GM12878 (cell line): ENCODE measurements at regions of chr1 and their contacts with region 1.

Region 1: DNA sequence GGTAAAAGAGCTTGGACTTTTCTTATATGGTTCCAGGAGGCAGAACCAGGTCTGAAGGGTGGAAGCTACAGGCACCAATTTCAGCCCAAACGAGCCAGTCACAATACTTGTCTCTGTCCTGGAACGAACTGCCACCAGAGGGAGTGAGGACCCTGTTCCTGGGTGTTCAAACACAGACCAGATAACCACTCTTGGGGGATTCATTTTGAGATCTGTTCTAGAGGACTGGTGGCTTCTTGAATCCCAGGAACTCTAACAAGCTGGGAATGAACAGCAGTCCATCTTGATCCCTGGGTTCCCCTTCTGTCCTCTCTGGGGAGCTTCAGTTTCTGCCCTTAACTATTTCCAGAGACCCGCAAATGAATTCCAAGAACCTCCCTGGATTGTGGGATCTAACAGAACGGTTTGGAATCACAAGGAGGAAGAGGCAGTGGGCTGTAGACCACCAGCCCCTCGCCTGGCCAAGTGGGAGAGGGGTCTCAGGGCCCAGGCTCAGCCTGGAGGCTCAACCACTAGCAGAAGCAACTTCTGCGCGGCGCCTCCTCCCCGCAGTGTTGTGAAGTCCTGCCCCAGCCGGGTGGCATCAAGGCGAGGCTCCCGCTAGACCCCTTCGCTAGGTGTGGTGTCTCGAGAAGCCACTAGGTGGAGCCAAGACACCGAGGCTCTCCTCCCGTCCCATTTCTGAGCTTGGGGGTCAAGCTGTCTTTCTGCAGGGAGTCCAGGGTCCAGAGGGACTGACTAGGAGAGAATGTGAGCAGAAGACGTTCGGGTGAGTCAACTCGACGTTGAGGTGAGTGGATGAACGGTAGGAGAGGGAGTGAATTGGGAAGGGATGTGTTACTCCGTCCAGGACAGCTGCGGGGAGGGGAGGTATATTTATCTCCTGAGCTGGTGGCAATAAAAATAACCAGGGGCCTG is 12.1 kb upstream of the NES start:
- DNase-seq: no peak
- ATAC-seq: peak; percentile 97
- H3K4me3 ChIP-seq: no peak overlapping the region
- H3K27ac ChIP-seq: no peak overlapping the region
- H3K4me1 ChIP-seq: peaks cover 4% of the 10 kb centered on the region
- H3K27me3 ChIP-seq: peaks cover 18 to 33% of the 10 kb centered on the region in 2 experiments
- CTCF ChIP-seq: peak; percentile 92 to 97 (median 97)
- EP300 ChIP-seq: no peak
- POLR2A ChIP-seq: no peak
- RAD21 ChIP-seq: peak; percentile 91

Region 2: GRCh38 chr1:156282479-156283222 is 406.6 kb before region 1 on chr1 and contains the start of gene SMG5:
- CTCF ChIA-PET with region 1: no interaction called
- POLR2A ChIA-PET with region 1: no interaction called
- RAD21 ChIA-PET with region 1: no interaction called
- SMC1A ChIA-PET with region 1: no interaction called
- in situ Hi-C with region 1: no loop called
- intact Hi-C with region 1: no loop called
- DNase-seq: peak; percentile 96
- ATAC-seq: peak; percentile 93
- H3K4me3 ChIP-seq: peak within 1 kb of the TSS; percentile 94
- H3K27ac ChIP-seq: peak within 1 kb of the TSS; percentile 86
- H3K4me1 ChIP-seq: peaks cover 15% of the 10 kb centered on the region; the same call in 1 of the 2 replicates
- H3K27me3 ChIP-seq: no peaks in the 10 kb centered on the region
- CTCF ChIP-seq: no peak
- EP300 ChIP-seq: no peak
- POLR2A ChIP-seq: peak; percentile 100
- RAD21 ChIP-seq: no peak
- polyA plus RNA-seq, gene SMG5: 0.76 to 1.9 TPM

Region 3: DNA sequence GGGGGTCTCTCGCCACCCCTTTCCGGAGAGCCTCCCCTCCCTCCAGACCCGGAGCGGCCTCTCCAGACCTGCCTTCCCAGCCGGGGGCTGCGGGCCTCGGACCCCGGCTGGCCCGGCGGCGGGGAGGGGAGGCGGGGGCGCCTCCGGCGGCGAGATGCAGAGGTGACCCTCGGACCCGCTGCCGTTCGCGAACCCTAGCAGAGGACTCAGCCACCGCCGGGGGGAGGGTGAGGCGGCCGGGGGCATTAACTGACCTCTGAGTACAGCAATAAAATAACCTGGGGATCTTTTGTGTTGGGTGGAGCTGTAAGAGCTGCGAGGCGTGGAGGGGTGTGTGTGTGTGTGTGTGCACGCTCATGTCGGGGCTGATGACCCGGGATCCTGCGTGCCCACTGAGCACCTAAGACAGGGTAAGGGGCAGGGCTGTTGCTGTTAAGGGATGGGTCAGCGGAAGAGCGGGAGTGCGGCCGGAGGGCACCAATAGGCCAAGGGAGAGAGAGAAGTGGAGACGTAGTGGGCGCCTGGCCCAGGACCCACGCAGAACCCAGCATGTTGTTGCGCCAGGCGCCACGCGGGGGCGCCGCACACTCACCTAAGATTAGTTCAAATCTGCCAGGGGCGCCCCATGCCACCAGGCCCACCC is 63.7 kb before region 1 on chr1:
- CTCF ChIA-PET with region 1: interaction called, 46 read pairs
- POLR2A ChIA-PET with region 1: no interaction called
- RAD21 ChIA-PET with region 1: interaction called, 5 read pairs
- SMC1A ChIA-PET with region 1: interaction called, 4 read pairs
- in situ Hi-C with region 1: no loop called
- intact Hi-C with region 1: no loop called
- DNase-seq: no peak
- ATAC-seq: peak; percentile 78
- H3K4me3 ChIP-seq: no peak overlapping the region
- H3K27ac ChIP-seq: no peak overlapping the region
- H3K4me1 ChIP-seq: no peaks in the 10 kb centered on the region
- H3K27me3 ChIP-seq: peaks cover 10 to 20% of the 10 kb centered on the region in 2 experiments
- CTCF ChIP-seq: peak; percentile 75 to 93 (median 80)
- EP300 ChIP-seq: no peak
- POLR2A ChIP-seq: no peak
- RAD21 ChIP-seq: peak; percentile 64

Region 4: GRCh38 chr1:156677616-156678596 is 11.4 kb before region 1 on chr1:
- CTCF ChIA-PET with region 1: interaction called, 38 read pairs
- POLR2A ChIA-PET with region 1: no interaction called
- RAD21 ChIA-PET with region 1: interaction called, 9 read pairs
- SMC1A ChIA-PET with region 1: interaction called, 7 read pairs
- in situ Hi-C with region 1: no loop called
- intact Hi-C with region 1: no loop called
- DNase-seq: no peak
- ATAC-seq: peak; percentile 70
- H3K4me3 ChIP-seq: no peak overlapping the region
- H3K27ac ChIP-seq: no peak overlapping the region
- H3K4me1 ChIP-seq: peaks cover 9% of the 10 kb centered on the region
- H3K27me3 ChIP-seq: peaks cover 16 to 21% of the 10 kb centered on the region in 2 experiments
- CTCF ChIP-seq: peak; percentile 79 to 86 (median 83)
- EP300 ChIP-seq: no peak
- POLR2A ChIP-seq: no peak
- RAD21 ChIP-seq: peak; percentile 96

Region 5: GRCh38 chr1:156721535-156721934 is 32.2 kb after region 1 on chr1:
- CTCF ChIA-PET with region 1: interaction called, 433 read pairs
- POLR2A ChIA-PET with region 1: interaction called, 21 read pairs
- RAD21 ChIA-PET with region 1: interaction called, 173 read pairs
- SMC1A ChIA-PET with region 1: interaction called, 168 read pairs
- in situ Hi-C with region 1: no loop called
- intact Hi-C with region 1: loop called (anchors 1 kb)
- DNase-seq: no peak
- ATAC-seq: peak; percentile 58
- H3K4me3 ChIP-seq: no peak overlapping the region
- H3K27ac ChIP-seq: peak overlapping the region; percentile 72
- H3K4me1 ChIP-seq: peaks cover 16% of the 10 kb centered on the region
- H3K27me3 ChIP-seq: no peaks in the 10 kb centered on the region
- CTCF ChIP-seq: no peak
- EP300 ChIP-seq: no peak
- POLR2A ChIP-seq: no peak
- RAD21 ChIP-seq: no peak

Region 6: DNA sequence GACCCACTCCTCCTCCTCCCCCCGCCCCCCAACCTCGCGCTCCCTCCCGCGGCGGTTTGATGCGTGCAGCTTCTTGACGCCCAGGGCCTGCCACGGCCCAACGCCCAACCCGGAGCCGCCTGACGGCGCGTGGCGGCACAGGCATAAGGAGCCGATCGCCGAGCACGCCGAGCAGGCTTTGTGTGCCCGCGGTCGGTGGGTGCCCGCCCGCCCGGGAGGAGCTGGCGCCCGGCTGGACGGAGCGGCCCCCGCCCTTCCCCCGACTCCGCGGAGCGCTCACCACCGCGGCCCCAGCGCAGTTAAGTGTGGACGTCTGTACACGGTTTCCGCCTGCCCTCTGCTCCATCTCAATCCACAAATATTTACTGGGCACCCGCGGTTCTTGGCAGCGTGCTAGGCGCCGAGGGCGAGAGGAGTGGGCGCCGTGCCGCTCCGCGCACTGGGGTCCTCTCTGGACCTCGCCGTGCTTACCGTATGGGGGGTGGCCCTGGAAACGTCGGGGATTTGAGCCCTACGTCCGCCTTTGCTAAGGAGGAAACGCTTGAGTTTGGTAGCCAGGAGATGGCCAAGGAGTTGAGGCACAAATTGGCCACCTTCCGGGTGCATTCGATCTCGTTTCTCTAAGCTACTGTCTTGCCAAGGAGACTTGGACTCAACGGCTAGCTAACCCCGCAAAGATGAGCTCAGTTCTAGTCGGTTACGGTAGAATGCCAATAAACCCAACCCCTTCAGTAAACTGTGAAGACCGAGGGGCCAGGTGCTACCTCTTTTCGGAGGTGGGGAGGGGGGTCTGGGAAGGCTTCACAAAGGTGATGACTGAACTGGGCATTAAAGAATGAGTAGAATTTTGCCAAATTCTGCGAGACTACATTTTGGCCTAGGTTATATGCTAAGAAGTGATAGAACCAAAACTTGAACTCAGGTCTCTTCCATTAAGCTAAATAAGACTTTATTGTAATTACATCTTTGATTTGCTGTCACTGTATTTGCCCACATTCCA is 62.8 kb after region 1 on chr1:
- CTCF ChIA-PET with region 1: interaction called, 15 read pairs
- POLR2A ChIA-PET with region 1: no interaction called
- RAD21 ChIA-PET with region 1: interaction called, 5 read pairs
- SMC1A ChIA-PET with region 1: no interaction called
- in situ Hi-C with region 1: no loop called
- intact Hi-C with region 1: no loop called
- DNase-seq: peak; percentile 82
- ATAC-seq: peak; percentile 80
- H3K4me3 ChIP-seq: peak overlapping the region; percentile 81
- H3K27ac ChIP-seq: peak overlapping the region; percentile 99
- H3K4me1 ChIP-seq: peaks cover 25% of the 10 kb centered on the region
- H3K27me3 ChIP-seq: no peaks in the 10 kb centered on the region
- CTCF ChIP-seq: 0 out of 6 replicates have a peak, but pooled peaks of 1 of the 3 experiments have one; percentile 3
- EP300 ChIP-seq: no peak
- POLR2A ChIP-seq: peak; percentile 84
- RAD21 ChIP-seq: no peak

Region 7: GRCh38 chr1:156797212-156797871 is 108.0 kb after region 1 on chr1:
- CTCF ChIA-PET with region 1: interaction called, 30 read pairs
- POLR2A ChIA-PET with region 1: no interaction called
- RAD21 ChIA-PET with region 1: interaction called, 5 read pairs
- SMC1A ChIA-PET with region 1: interaction called, 4 read pairs
- in situ Hi-C with region 1: no loop called
- intact Hi-C with region 1: no loop called
- DNase-seq: no peak
- ATAC-seq: peak; percentile 94
- H3K4me3 ChIP-seq: no peak overlapping the region
- H3K27ac ChIP-seq: no peak overlapping the region
- H3K4me1 ChIP-seq: peaks cover 17% of the 10 kb centered on the region
- H3K27me3 ChIP-seq: no peaks in the 10 kb centered on the region
- CTCF ChIP-seq: peak; percentile 78 to 88 (median 82)
- EP300 ChIP-seq: no peak
- POLR2A ChIP-seq: no peak
- RAD21 ChIP-seq: peak; percentile 84

Region 8: DNA sequence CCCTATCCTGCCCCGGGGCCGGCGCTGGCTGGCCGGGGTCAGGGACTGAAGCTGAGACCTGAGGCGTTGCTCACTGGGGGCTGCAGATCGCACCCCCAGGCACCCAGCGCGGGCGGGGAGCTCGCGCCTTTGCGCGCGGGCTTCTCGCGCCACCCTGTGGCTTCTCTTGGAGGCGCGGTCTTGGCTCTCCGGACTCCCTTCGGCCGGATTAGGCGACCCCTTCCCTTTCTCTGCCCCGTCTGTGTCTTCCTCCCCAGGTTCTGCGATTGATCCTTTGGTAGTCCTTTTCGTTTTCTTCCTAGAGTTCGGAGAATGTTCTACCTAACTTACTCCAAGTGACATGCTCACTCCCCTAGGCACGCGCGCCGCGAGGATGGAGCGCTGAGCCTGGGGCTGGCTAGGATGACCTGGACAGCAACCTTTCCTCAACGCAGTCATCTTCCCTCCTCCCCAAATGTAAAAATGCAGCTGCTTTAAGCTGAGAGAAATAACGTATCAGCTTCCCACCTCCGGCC is 170.9 kb after region 1 on chr1:
- CTCF ChIA-PET with region 1: interaction called, 106 read pairs
- POLR2A ChIA-PET with region 1: interaction called, 10 read pairs
- RAD21 ChIA-PET with region 1: interaction called, 57 read pairs
- SMC1A ChIA-PET with region 1: interaction called, 29 read pairs
- in situ Hi-C with region 1: loop called (anchors 5 kb)
- intact Hi-C with region 1: loop called (anchors 1 kb)
- DNase-seq: no peak
- ATAC-seq: peak; percentile 84
- H3K4me3 ChIP-seq: peak overlapping the region; percentile 53; the same call in 1 of the 2 replicates
- H3K27ac ChIP-seq: no peak overlapping the region
- H3K4me1 ChIP-seq: peaks cover 26% of the 10 kb centered on the region
- H3K27me3 ChIP-seq: peaks cover 8 to 22% of the 10 kb centered on the region in 2 experiments
- CTCF ChIP-seq: peak; percentile 63 to 91 (median 77)
- EP300 ChIP-seq: no peak
- POLR2A ChIP-seq: no peak
- RAD21 ChIP-seq: peak; percentile 80